Tibial artery (tissue), 4 donors: ENCODE measurements at regions of chr5 and their contacts with region 1.

Region 1: GRCh38 chr5:94102849-94103248 is 361.4 kb upstream of the POU5F2 start:
- DNase-seq: no peak
- H3K4me3 ChIP-seq: no peak overlapping the region
- H3K27ac ChIP-seq: no peak overlapping the region
- H3K4me1 ChIP-seq: no peaks in the 10 kb centered on the region
- H3K27me3 ChIP-seq: no peaks in the 10 kb centered on the region
- CTCF ChIP-seq: no peak

Region 2: DNA sequence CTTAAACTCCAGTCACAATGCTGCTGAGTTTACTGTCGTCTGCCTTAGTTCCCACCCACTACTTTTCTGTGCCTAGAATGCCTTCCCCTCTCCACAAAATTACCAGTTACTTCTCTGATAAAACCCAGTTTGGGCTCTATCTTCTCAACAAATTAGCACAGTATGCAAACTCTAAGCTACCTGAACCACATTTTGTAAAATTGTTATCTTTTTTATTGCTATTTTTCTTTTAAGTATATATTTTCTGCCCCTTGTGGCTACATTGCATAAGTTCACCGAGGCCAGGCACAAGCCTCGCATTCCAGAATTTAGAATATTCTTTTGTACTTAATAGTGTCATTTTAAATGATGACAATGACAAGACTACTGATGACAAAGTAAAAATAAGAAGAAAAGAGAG is 421.4 kb before region 1 on chr5:
- intact Hi-C with region 1: loop called (anchors 5 kb)
- DNase-seq: no peak
- H3K4me3 ChIP-seq: no peak overlapping the region
- H3K27ac ChIP-seq: no peak overlapping the region
- H3K4me1 ChIP-seq: peaks cover 0 to 22% (median 6%) of the 10 kb centered on the region in 4 donors
- H3K27me3 ChIP-seq: no peaks in the 10 kb centered on the region
- CTCF ChIP-seq: no peak

Region 3: DNA sequence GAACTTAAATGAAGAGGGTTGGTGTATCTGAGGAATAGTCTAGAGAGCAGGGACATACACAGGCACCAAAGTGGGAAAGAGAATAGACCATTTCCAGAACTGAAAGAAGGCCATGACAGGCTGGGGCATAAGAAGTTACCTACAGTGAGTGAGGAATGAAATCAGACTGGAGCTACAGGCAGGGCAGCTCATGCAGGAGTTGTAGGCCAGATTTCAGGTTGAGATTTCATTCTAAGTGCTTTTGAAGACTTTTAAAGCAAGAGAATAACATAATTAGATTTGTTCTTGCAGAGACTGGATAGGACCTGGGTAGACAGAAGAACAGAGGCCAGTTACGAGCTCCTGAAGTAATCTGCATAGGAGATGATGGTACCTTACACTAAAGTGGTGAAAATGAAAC is 234.8 kb after region 1 on chr5:
- intact Hi-C with region 1: no loop called
- DNase-seq: no peak
- H3K4me3 ChIP-seq: no peak overlapping the region
- H3K27ac ChIP-seq: no peak overlapping the region
- H3K4me1 ChIP-seq: no peaks in the 10 kb centered on the region
- H3K27me3 ChIP-seq: no peaks in the 10 kb centered on the region
- CTCF ChIP-seq: no peak